ENCODE measurements at regions of chr2 and their contacts with region 1.

Region 1: DNA sequence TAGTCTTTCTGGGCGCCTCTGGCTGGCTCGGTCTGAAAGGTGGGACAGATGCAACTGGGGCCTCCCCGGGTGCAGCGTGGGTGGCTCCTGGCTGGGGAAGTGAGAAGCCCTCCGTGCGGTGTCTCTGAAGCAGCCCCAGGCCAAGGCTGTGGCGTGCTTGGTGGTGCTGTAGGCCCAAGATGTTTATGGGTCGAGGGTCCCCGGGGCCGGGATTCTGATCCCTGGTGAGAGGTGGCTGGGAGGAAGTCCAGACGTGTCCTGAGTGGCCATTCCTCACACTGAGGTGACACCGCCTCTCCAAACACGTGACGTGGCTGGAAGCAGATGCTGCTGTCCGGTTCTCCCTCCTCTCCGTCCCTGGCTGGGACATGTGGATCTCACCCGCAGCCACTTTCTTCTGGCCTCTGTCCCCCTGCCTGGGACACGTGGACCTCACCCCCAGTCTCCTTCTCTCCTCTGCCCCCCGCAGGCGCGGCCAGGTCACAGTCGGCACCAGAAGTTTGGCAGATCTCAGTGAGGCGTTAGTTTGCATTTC is 12.6 kb downstream of the RTP5 start:
- DNase-seq: peak; percentile 31 to 69
- ATAC-seq: peak; percentile 43 to 61
- H3K4me3 ChIP-seq: peak overlapping the region; percentile 43 to 81 (median 60)
- H3K27ac ChIP-seq: peak overlapping the region; percentile 62 to 84 (median 64)
- H3K4me1 ChIP-seq: peaks cover 13 to 14% of the 10 kb centered on the region in 2 donors
- H3K27me3 ChIP-seq: no peaks in the 10 kb centered on the region
- CTCF ChIP-seq: no peak
- POLR2A ChIP-seq: no peak

Region 2: GRCh38 chr2:241329669-241330615 is 552.2 kb before region 1 on chr2:
- in situ Hi-C with region 1: no loop called
- intact Hi-C with region 1: no loop called
- DNase-seq: no peak
- ATAC-seq: no peak
- H3K4me3 ChIP-seq: no peak overlapping the region
- H3K27ac ChIP-seq: no peak overlapping the region
- H3K4me1 ChIP-seq: peaks cover 3 to 8% of the 10 kb centered on the region in 2 donors
- H3K27me3 ChIP-seq: no peaks in the 10 kb centered on the region
- CTCF ChIP-seq: no peak
- POLR2A ChIP-seq: no peak

Region 3: GRCh38 chr2:241637000-241637791 is 245.0 kb before region 1 on chr2 and contains the starts of genes ATG4B and THAP4:
- in situ Hi-C with region 1: no loop called
- intact Hi-C with region 1: no loop called
- DNase-seq: peak; percentile 70 to 81
- ATAC-seq: peak; percentile 90 to 91
- H3K4me3 ChIP-seq: peak within 1 kb of the TSS; percentile 73 to 95 (median 92)
- H3K27ac ChIP-seq: peak within 1 kb of the TSS; percentile 92 to 100 (median 98)
- H3K4me1 ChIP-seq: peaks cover 36 to 49% of the 10 kb centered on the region in 2 donors
- H3K27me3 ChIP-seq: no peaks in the 10 kb centered on the region
- CTCF ChIP-seq: peak in 1 of 5 experiments; percentile 51
- POLR2A ChIP-seq: peak; percentile 65 to 74
- total RNA-seq, gene ATG4B: 32.0 to 57.5 (median 49.8) TPM
- total RNA-seq, gene THAP4: 71.3 to 83.3 (median 79.9) TPM

Region 4: GRCh38 chr2:241702132-241703031 is 179.8 kb before region 1 on chr2:
- in situ Hi-C with region 1: no loop called
- intact Hi-C with region 1: loop called (anchors 10 kb)
- DNase-seq: peak; percentile 78 to 81
- ATAC-seq: peak; percentile 83 to 85
- H3K4me3 ChIP-seq: peak overlapping the region; percentile 57 to 97 (median 82)
- H3K27ac ChIP-seq: peak overlapping the region; percentile 89 to 97 (median 94)
- H3K4me1 ChIP-seq: peaks cover 6 to 16% of the 10 kb centered on the region in 2 donors
- H3K27me3 ChIP-seq: no peaks in the 10 kb centered on the region
- CTCF ChIP-seq: peak in 4 of 5 experiments; percentile 28 to 36 (median 34)
- POLR2A ChIP-seq: no peak

Region 5: DNA sequence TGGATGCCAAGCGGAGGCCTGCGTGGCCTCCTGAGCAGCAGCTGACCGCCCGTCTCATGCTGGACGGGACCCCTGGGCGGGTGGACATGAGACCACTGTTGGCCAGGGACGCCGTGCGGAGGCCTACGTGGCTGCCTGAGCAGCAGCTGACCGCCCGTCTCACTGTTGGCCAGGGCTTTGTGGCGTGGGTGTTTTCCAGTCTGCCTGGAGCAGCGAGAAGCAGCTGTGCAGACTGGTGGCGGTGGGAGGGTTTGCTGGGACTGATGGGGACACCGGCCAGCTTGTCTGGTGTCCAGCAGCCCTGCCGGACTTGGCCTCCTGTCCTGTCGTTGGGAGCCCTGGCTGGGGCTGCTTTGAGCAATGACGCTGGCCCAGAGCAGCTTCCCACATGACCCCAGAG is 153.5 kb before region 1 on chr2:
- in situ Hi-C with region 1: no loop called
- intact Hi-C with region 1: loop called (anchors 2 kb)
- DNase-seq: peak; percentile 70 to 93
- ATAC-seq: peak; percentile 94 to 96
- H3K4me3 ChIP-seq: peak overlapping the region; percentile 18 to 32 (median 26)
- H3K27ac ChIP-seq: peak overlapping the region; percentile 81 to 90 (median 88)
- H3K4me1 ChIP-seq: peaks cover 12 to 13% of the 10 kb centered on the region in 2 donors
- H3K27me3 ChIP-seq: no peaks in the 10 kb centered on the region
- CTCF ChIP-seq: no peak
- POLR2A ChIP-seq: peak; percentile 15 to 35

Region 6: DNA sequence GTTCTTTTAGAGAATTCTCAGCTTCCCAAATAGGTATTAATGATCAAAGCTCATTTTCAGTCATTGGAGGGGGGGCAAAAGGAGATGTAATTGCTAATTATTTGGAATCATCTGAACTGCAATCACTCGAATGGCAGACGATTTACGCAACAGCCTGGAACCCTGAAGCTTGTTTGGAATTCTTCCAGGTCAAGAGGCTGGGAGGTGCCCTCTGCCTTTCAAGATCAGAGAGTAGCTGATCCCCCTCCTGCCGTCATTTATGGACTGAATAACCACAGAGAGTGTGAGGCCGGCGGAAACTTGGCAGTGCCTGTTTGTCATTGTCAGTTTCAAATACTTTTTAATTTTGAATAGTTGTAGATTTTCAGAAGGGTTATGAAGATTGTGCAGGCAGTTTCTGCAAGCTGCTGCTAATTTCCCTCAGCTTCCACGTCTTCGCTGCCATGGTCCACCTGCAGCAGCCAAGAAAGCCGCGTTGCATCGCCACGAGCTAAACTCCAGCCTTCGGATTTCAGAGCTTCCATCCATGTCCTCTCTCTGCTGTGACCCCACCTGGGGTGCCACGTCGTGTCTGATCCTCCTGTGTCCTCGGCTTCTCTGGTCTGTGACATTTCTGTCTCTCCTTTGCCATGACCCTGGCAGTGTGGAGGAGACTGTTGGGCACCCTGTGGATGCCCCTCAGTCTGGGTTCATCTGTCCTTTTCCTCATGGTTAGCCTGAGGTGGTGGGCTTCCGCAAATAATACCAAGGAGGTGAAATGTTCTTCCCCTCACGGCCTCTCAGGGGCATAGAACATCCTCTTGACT is 93.9 kb after region 1 on chr2:
- in situ Hi-C with region 1: no loop called
- intact Hi-C with region 1: no loop called
- DNase-seq: no peak
- ATAC-seq: no peak
- H3K4me3 ChIP-seq: no peak overlapping the region
- H3K27ac ChIP-seq: no peak overlapping the region
- H3K4me1 ChIP-seq: no peaks in the 10 kb centered on the region
- H3K27me3 ChIP-seq: no peaks in the 10 kb centered on the region
- CTCF ChIP-seq: no peak
- POLR2A ChIP-seq: no peak

Measured in gastrocnemius medialis (tissue), 4 donors.